Gastrocnemius medialis (tissue), 4 donors: ENCODE measurements at regions of chr3 and their contacts with region 1.

Region 1: GRCh38 chr3:84547971-84548970 is 410.5 kb upstream of the CADM2 start:
- DNase-seq: peak in 1 of 2 donors; percentile 9
- ATAC-seq: peak; percentile 76 to 79
- H3K4me3 ChIP-seq: peak overlapping the region in 2 of 4 donors; percentile 29 to 34
- H3K27ac ChIP-seq: no peak overlapping the region
- H3K4me1 ChIP-seq: no peaks in the 10 kb centered on the region
- H3K27me3 ChIP-seq: no peaks in the 10 kb centered on the region
- CTCF ChIP-seq: peak; percentile 37 to 60 (median 49)
- POLR2A ChIP-seq: no peak

Region 2: GRCh38 chr3:85567071-85567676 is 1018.9 kb after region 1 on chr3:
- in situ Hi-C with region 1: loop called in 2 of 4 experiments (anchors 10 to 25 kb)
- intact Hi-C with region 1: no loop called
- DNase-seq: peak in 1 of 2 donors; percentile 13
- ATAC-seq: no peak
- H3K4me3 ChIP-seq: no peak overlapping the region
- H3K27ac ChIP-seq: no peak overlapping the region
- H3K4me1 ChIP-seq: no peaks in the 10 kb centered on the region
- H3K27me3 ChIP-seq: no peaks in the 10 kb centered on the region
- CTCF ChIP-seq: peak; percentile 15 to 59 (median 32)
- POLR2A ChIP-seq: no peak

Region 3: GRCh38 chr3:85875589-85875988 is 1327.3 kb after region 1 on chr3:
- in situ Hi-C with region 1: no loop called
- intact Hi-C with region 1: no loop called
- DNase-seq: no peak
- ATAC-seq: no peak
- H3K4me3 ChIP-seq: no peak overlapping the region
- H3K27ac ChIP-seq: no peak overlapping the region
- H3K4me1 ChIP-seq: no peaks in the 10 kb centered on the region
- H3K27me3 ChIP-seq: no peaks in the 10 kb centered on the region
- CTCF ChIP-seq: no peak
- POLR2A ChIP-seq: no peak